Calu3 (cell line): ENCODE measurements at regions of chr6 and their contacts with region 1.

Region 1: DNA sequence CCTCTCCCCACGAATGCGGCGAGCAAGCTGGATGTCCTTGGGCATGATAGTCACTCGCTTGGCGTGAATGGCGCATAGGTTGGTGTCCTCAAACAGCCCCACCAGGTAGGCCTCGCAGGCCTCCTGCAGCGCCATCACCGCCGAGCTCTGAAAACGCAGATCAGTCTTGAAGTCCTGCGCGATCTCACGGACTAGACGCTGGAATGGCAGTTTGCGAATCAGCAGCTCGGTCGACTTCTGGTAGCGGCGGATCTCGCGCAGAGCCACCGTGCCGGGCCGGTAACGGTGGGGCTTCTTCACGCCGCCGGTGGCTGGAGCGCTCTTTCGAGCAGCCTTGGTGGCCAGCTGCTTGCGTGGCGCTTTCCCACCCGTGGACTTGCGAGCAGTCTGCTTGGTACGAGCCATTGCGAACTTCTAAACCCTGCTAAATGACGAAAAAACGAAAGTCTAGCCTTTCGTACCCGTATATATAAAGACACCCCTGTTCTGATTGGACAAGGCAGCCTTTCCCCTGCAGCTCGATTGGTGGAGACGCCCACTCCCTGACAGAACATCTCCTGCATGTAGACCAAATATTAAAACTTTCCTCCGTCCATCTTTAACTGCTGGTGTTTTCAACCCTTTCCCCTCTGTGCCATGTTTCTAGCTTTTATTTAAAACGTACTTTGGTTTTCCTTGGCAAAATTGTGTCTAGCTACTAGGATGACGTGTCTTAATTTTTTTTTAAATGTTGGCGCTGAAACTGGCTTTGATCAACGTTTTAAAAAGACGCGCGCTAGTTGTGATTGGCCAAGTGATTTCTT is 109.8 kb downstream of the HFE start:
- DNase-seq: peak; percentile 84
- H3K4me3 Mint-ChIP-seq: peak overlapping the region; percentile 90
- H3K27ac Mint-ChIP-seq: peak overlapping the region; percentile 93
- H3K4me1 Mint-ChIP-seq: peaks cover 40% of the 10 kb centered on the region
- H3K27me3 Mint-ChIP-seq: no peaks in the 10 kb centered on the region
- CTCF ChIP-seq: no peak

Region 2: DNA sequence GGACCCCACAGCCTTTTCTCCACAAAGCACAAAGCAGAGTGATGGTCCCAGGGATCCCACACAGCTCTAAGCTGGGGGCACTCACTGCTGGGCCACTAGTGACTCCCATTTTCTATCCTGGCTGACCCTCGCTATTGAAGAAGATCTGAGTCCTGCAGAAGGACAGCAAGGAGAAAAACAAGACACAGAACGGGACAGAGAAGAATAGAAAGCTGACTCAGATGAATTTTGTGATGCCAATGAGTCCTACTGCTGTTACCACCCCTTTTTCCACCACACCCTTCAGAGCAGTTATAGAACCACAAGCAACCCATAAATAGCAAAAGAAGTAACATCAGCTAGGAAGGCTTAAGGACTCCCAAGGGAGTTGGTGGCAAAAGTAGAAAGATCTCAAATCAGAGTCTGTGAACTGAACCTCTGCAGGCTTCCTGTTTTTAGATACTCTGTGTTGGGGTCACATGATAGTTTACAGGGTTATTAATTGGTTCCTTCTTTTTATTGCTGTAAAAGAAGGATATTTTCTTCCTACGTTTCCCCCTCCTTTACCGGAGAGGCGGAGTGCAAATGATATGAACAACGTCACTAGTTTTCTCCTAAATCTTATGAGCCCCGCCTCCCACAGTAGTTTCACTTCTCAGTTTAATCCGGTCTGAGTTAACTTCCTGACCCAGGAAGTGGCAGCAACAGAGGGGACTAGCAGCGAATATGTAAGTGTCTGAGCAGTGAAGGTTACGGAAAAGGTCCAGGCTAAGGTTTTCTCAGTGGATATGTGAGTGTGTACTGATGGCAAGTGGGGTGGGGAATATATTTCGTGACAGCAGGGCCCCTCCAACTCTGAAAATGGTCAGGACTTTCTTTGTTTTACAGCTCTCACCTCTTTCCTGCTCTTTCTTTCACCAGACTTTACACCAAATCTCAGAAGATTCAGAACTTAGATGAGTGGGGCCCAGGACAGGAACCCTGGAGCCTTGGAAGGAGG is 234.6 kb before region 1 on chr6 and contains the start of gene TRIM38:
- CTCF ChIA-PET with region 1: no interaction called
- intact Hi-C with region 1: no loop called
- DNase-seq: peak; percentile 78
- H3K4me3 Mint-ChIP-seq: peak within 1 kb of the TSS; percentile 95
- H3K27ac Mint-ChIP-seq: peak within 1 kb of the TSS; percentile 100
- H3K4me1 Mint-ChIP-seq: peaks cover 44% of the 10 kb centered on the region
- H3K27me3 Mint-ChIP-seq: no peaks in the 10 kb centered on the region
- CTCF ChIP-seq: no peak
- total RNA-seq, gene TRIM38: 20.6 and 26.1 TPM in 2 replicates

Region 3: DNA sequence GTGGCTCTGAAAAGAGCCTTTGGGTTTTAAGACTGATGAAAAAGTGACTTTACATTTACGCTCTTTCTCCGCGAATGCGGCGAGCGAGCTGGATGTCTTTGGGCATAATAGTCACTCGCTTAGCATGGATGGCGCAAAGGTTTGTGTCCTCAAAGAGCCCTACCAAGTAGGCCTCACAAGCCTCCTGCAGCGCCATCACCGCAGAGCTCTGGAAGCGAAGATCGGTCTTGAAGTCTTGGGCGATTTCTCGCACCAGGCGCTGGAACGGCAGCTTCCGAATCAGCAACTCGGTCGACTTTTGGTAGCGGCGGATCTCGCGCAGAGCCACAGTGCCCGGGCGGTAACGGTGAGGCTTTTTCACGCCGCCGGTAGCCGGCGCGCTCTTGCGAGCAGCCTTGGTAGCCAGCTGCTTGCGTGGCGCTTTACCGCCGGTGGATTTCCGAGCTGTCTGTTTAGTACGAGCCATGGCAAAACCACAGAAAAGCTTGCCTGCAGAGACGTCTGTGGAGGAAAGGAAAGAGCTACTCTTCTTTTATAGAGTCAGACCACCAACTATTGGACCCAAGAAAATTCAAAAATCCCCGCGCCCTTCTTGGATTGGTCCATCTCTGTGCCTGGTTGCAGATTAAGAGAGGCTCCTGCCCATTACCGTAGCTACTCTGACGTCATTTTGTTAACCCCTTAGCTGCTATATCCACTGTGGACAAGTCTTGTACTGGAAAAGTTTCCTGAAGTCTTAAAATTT is 165.3 kb before region 1 on chr6:
- CTCF ChIA-PET with region 1: interaction called, 8 read pairs
- intact Hi-C with region 1: loop called (anchors 5 kb)
- DNase-seq: peak; percentile 95
- H3K4me3 Mint-ChIP-seq: peak overlapping the region; percentile 88
- H3K27ac Mint-ChIP-seq: peak overlapping the region; percentile 100
- H3K4me1 Mint-ChIP-seq: peaks cover 77% of the 10 kb centered on the region
- H3K27me3 Mint-ChIP-seq: peaks cover 10% of the 10 kb centered on the region
- CTCF ChIP-seq: no peak

Region 4: GRCh38 chr6:26054857-26055669 is 142.0 kb before region 1 on chr6:
- CTCF ChIA-PET with region 1: no interaction called
- intact Hi-C with region 1: loop called (anchors 5 kb)
- DNase-seq: peak; percentile 90
- H3K4me3 Mint-ChIP-seq: peak overlapping the region; percentile 71
- H3K27ac Mint-ChIP-seq: peak overlapping the region; percentile 97
- H3K4me1 Mint-ChIP-seq: peaks cover 34% of the 10 kb centered on the region
- H3K27me3 Mint-ChIP-seq: no peaks in the 10 kb centered on the region
- CTCF ChIP-seq: no peak

Region 5: GRCh38 chr6:26156076-26156849 is 40.8 kb before region 1 on chr6:
- CTCF ChIA-PET with region 1: interaction called, 11 read pairs
- intact Hi-C with region 1: loop called (anchors 2 kb)
- DNase-seq: peak; percentile 93
- H3K4me3 Mint-ChIP-seq: peak overlapping the region; percentile 85
- H3K27ac Mint-ChIP-seq: peak overlapping the region; percentile 100
- H3K4me1 Mint-ChIP-seq: peaks cover 51% of the 10 kb centered on the region
- H3K27me3 Mint-ChIP-seq: peaks cover 17% of the 10 kb centered on the region
- CTCF ChIP-seq: no peak

Region 6: DNA sequence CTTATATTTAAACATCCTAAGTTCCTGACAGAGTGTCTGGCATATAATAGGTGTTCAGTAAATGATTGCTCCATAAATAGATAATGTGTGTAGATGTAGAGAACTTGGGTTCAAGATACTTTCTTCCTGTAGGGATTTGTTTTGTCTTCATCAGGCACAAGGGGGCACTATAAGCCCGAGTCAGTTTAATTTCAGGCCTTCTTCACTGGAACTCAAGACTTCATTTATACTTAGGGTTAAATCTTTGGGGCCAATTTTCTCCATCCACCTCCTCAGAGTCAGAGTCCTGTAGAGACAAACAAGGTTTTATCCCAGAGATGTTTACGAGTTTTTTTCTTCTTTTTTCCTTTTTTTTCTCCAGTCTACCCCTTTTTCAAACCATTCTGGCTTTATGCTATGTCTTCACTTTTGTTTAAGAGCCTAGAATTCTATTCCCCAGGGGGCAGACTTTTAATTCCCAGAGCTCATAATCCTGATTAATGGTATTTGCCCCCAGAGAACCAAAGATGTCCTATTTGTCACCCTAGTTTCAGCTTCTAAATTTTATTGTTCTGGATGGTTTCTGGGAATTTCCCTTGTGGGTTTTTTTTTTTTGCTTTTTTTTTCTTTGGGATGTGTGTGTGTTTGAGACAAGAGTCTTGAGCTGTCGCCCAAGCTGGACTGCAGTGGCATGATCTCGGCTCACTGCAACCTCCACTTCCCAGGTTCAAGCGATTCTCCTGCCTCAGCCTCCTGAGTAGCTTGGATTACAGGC is 21.4 kb before region 1 on chr6:
- CTCF ChIA-PET with region 1: interaction called, 5 read pairs
- intact Hi-C with region 1: loop called (anchors 2 kb)
- DNase-seq: peak; percentile 72
- H3K4me3 Mint-ChIP-seq: peak overlapping the region; percentile 30
- H3K27ac Mint-ChIP-seq: peak overlapping the region; percentile 79
- H3K4me1 Mint-ChIP-seq: peaks cover 70% of the 10 kb centered on the region
- H3K27me3 Mint-ChIP-seq: no peaks in the 10 kb centered on the region
- CTCF ChIP-seq: peak; percentile 69

Region 7: GRCh38 chr6:26183581-26184366 is 13.3 kb before region 1 on chr6:
- CTCF ChIA-PET with region 1: interaction called, 18 read pairs
- intact Hi-C with region 1: loop called (anchors 2 kb)
- DNase-seq: peak; percentile 64
- H3K4me3 Mint-ChIP-seq: peak overlapping the region; percentile 78
- H3K27ac Mint-ChIP-seq: peak overlapping the region; percentile 84
- H3K4me1 Mint-ChIP-seq: peaks cover 38% of the 10 kb centered on the region
- H3K27me3 Mint-ChIP-seq: no peaks in the 10 kb centered on the region
- CTCF ChIP-seq: no peak